ENCODE measurements at regions of chr17 and their contacts with region 1.

Region 1: GRCh38 chr17:2786176-2786881 is 9.9 kb upstream of the RAP1GAP2 start:
- DNase-seq: peak; percentile 99
- ATAC-seq: peak; percentile 97
- H3K4me3 Mint-ChIP-seq: no peak overlapping the region
- H3K27ac Mint-ChIP-seq: peak overlapping the region; percentile 45; the same call in 1 of the 2 replicates
- H3K4me1 Mint-ChIP-seq: peaks cover 4% of the 10 kb centered on the region
- H3K27me3 Mint-ChIP-seq: no peaks in the 10 kb centered on the region
- CTCF ChIP-seq: peak; percentile 81

Region 2: GRCh38 chr17:2580661-2581060 is 205.7 kb before region 1 on chr17:
- CTCF ChIA-PET with region 1: no interaction called
- POLR2A ChIA-PET with region 1: no interaction called
- DNase-seq: no peak
- ATAC-seq: no peak
- H3K4me3 Mint-ChIP-seq: no peak overlapping the region
- H3K27ac Mint-ChIP-seq: 0 out of 2 replicates have a peak overlapping the region, but pooled peaks have one; percentile 60
- H3K4me1 Mint-ChIP-seq: peaks cover 10% of the 10 kb centered on the region
- H3K27me3 Mint-ChIP-seq: no peaks in the 10 kb centered on the region
- CTCF ChIP-seq: no peak

Region 3: GRCh38 chr17:2724778-2725164 is 61.6 kb before region 1 on chr17:
- CTCF ChIA-PET with region 1: interaction called, 17 read pairs
- POLR2A ChIA-PET with region 1: interaction called, 3 read pairs
- DNase-seq: peak; percentile 73
- ATAC-seq: peak; percentile 58
- H3K4me3 Mint-ChIP-seq: peak overlapping the region; percentile 50
- H3K27ac Mint-ChIP-seq: no peak overlapping the region
- H3K4me1 Mint-ChIP-seq: peaks cover 25% of the 10 kb centered on the region
- H3K27me3 Mint-ChIP-seq: peaks cover 8% of the 10 kb centered on the region
- CTCF ChIP-seq: no peak

Region 4: GRCh38 chr17:2796164-2797125 is 10.1 kb after region 1 on chr17 and contains the start of gene RAP1GAP2:
- CTCF ChIA-PET with region 1: interaction called, 20 read pairs
- POLR2A ChIA-PET with region 1: interaction called, 3 read pairs
- DNase-seq: no peak
- ATAC-seq: no peak
- H3K4me3 Mint-ChIP-seq: no peak within 1 kb of the TSS
- H3K27ac Mint-ChIP-seq: peak within 1 kb of the TSS; percentile 60; the same call in 1 of the 2 replicates
- H3K4me1 Mint-ChIP-seq: peaks cover 17% of the 10 kb centered on the region
- H3K27me3 Mint-ChIP-seq: no peaks in the 10 kb centered on the region
- CTCF ChIP-seq: no peak
- total RNA-seq, gene RAP1GAP2: 64.5 to 72.8 TPM (median 65.4 TPM) in 3 replicates

Region 5: GRCh38 chr17:2828397-2829038 is 42.2 kb after region 1 on chr17:
- CTCF ChIA-PET with region 1: interaction called, 43 read pairs
- POLR2A ChIA-PET with region 1: no interaction called
- DNase-seq: peak; percentile 95
- ATAC-seq: peak; percentile 91
- H3K4me3 Mint-ChIP-seq: no peak overlapping the region
- H3K27ac Mint-ChIP-seq: no peak overlapping the region
- H3K4me1 Mint-ChIP-seq: peaks cover 11% of the 10 kb centered on the region
- H3K27me3 Mint-ChIP-seq: no peaks in the 10 kb centered on the region
- CTCF ChIP-seq: peak; percentile 94

Region 6: GRCh38 chr17:2844416-2844815 is 58.1 kb after region 1 on chr17:
- CTCF ChIA-PET with region 1: interaction called, 12 read pairs
- POLR2A ChIA-PET with region 1: interaction called, 8 read pairs
- DNase-seq: peak; percentile 39
- ATAC-seq: peak; percentile 10
- H3K4me3 Mint-ChIP-seq: no peak overlapping the region
- H3K27ac Mint-ChIP-seq: peak overlapping the region; percentile 73
- H3K4me1 Mint-ChIP-seq: peaks cover 29% of the 10 kb centered on the region
- H3K27me3 Mint-ChIP-seq: no peaks in the 10 kb centered on the region
- CTCF ChIP-seq: no peak

Region 7: GRCh38 chr17:2959321-2960130 is 173.2 kb after region 1 on chr17:
- CTCF ChIA-PET with region 1: no interaction called
- POLR2A ChIA-PET with region 1: no interaction called
- DNase-seq: no peak
- ATAC-seq: no peak
- H3K4me3 Mint-ChIP-seq: no peak overlapping the region
- H3K27ac Mint-ChIP-seq: peak overlapping the region; percentile 82
- H3K4me1 Mint-ChIP-seq: peaks cover 47% of the 10 kb centered on the region
- H3K27me3 Mint-ChIP-seq: no peaks in the 10 kb centered on the region
- CTCF ChIP-seq: no peak

Region 8: DNA sequence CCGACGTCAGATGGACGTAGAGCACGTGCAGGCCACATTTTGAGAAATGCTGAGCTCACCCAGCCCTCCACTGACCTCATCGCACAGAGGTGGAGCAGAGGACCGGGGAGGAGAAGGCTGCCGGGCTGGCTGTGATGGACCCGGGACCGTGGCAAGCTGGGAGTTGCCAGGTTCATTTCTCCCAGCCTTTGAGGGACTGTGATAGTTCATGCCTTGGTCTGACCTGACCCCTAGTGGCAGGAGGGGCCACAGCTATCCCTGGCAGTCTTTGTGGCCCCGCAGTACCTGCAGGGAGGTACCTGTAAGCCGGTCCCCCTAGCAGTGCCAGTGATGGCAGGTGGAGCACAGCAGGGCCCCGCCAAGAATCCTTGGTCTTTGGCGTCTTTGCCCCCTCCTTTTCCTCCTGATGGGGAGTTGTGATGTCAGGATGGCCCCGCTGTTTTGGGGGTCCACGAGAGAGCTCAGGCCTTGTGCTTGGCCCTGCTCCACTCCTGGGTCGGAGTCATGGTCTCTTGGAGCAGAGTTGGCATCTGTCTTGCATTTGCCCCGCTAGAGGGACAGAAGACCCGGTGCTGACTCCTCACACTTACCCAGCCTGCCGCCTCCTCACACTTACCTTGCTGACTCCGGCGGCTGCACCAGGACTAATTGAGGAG is 226.7 kb after region 1 on chr17:
- CTCF ChIA-PET with region 1: interaction called, 23 read pairs
- POLR2A ChIA-PET with region 1: no interaction called
- DNase-seq: peak; percentile 86
- ATAC-seq: peak; percentile 97
- H3K4me3 Mint-ChIP-seq: no peak overlapping the region
- H3K27ac Mint-ChIP-seq: no peak overlapping the region
- H3K4me1 Mint-ChIP-seq: no peaks in the 10 kb centered on the region
- H3K27me3 Mint-ChIP-seq: no peaks in the 10 kb centered on the region
- CTCF ChIP-seq: peak; percentile 77

Measured in WTC11 (cell line).